ENCODE measurements at regions of chr4 and their contacts with region 1.

Region 1: DNA sequence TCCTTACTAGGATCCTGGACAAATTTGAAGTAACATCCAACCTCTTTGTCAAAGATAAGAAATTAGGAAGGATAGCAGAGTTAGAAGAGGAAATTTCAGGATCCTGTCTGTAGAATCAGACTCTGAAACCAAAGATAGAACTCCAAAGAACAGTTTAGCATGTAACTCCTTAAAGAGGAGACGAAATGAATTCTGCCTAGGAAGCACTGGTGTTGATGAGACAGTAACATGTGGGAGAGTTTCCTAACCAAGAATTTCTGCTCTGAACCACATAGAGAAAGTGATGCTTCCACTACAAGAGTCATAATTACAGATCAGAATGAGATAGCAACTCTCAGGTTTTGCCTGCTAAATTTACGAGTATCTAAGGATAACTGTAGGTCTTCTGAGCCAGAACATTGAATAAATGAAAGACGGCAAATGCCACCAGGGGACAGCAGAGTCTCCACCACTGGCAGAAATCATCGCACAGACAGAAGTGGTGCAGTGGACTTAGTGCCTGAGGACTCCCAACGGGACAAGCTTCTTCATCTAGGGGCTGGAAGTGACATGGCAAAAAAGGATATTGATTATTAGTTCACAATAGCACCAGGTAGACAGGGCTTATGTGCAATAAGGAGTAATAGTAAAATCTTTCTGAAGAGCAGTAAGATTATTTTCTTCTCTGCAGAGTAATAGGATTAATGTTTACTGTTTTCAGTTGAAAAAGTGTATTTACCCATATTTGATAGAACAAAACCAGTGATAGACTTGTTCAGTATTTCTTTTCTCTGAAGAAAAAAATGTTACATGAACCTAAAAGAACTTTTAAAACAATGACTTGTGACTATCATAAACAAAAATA is 6.7 kb upstream of the PPID start:
- DNase-seq: no peak
- H3K4me3 ChIP-seq: no peak overlapping the region
- H3K27ac ChIP-seq: no peak overlapping the region
- H3K4me1 ChIP-seq: peaks cover 0 to 10% (median 3%) of the 10 kb centered on the region in 4 donors
- H3K27me3 ChIP-seq: no peaks in the 10 kb centered on the region
- CTCF ChIP-seq: peak; percentile 84 to 95 (median 95)
- EP300 ChIP-seq: no peak
- POLR2A ChIP-seq: no peak

Region 2: GRCh38 chr4:158849681-158850080 is 119.7 kb after region 1 on chr4:
- intact Hi-C with region 1: loop called (anchors 1 kb)
- DNase-seq: no peak
- H3K4me3 ChIP-seq: no peak overlapping the region
- H3K27ac ChIP-seq: no peak overlapping the region
- H3K4me1 ChIP-seq: peaks cover 0 to 10% (median 7%) of the 10 kb centered on the region in 4 donors
- H3K27me3 ChIP-seq: no peaks in the 10 kb centered on the region
- CTCF ChIP-seq: no peak
- EP300 ChIP-seq: no peak
- POLR2A ChIP-seq: no peak

Region 3: GRCh38 chr4:158949099-158949498 is 219.2 kb after region 1 on chr4:
- intact Hi-C with region 1: no loop called
- DNase-seq: no peak
- H3K4me3 ChIP-seq: no peak overlapping the region
- H3K27ac ChIP-seq: no peak overlapping the region
- H3K4me1 ChIP-seq: no peaks in the 10 kb centered on the region
- H3K27me3 ChIP-seq: no peaks in the 10 kb centered on the region
- CTCF ChIP-seq: no peak
- EP300 ChIP-seq: no peak
- POLR2A ChIP-seq: no peak

Region 4: GRCh38 chr4:159102622-159103383 is 372.9 kb after region 1 on chr4 and contains the start of gene RAPGEF2:
- intact Hi-C with region 1: loop called (anchors 5 kb)
- DNase-seq: peak; percentile 96
- H3K4me3 ChIP-seq: peak within 1 kb of the TSS; percentile 96 to 100 (median 100)
- H3K27ac ChIP-seq: peak within 1 kb of the TSS; percentile 96 to 98 (median 98)
- H3K4me1 ChIP-seq: peaks cover 16 to 48% (median 44%) of the 10 kb centered on the region in 4 donors
- H3K27me3 ChIP-seq: no peaks in the 10 kb centered on the region
- CTCF ChIP-seq: no peak
- EP300 ChIP-seq: no peak
- POLR2A ChIP-seq: peak; percentile 63
- total RNA-seq, gene RAPGEF2: 55.6 to 61.5 (median 58.4) TPM

Measured in esophagus muscularis mucosa (tissue), 4 donors.